ENCODE measurements at regions of chr17 and their contacts with region 1.

Region 1: GRCh38 chr17:55452139-55452790 is 30.6 kb upstream of the MMD start:
- DNase-seq: no peak
- H3K4me3 ChIP-seq: no peak overlapping the region
- H3K4me3 Mint-ChIP-seq: no peak overlapping the region
- H3K27ac Mint-ChIP-seq: peak overlapping the region; percentile 51
- H3K4me1 ChIP-seq: peaks cover 77% of the 10 kb centered on the region
- H3K4me1 Mint-ChIP-seq: peaks cover 73% of the 10 kb centered on the region
- H3K27me3 ChIP-seq: no peaks in the 10 kb centered on the region
- H3K27me3 Mint-ChIP-seq: no peaks in the 10 kb centered on the region
- CTCF ChIP-seq: no peak

Region 2: GRCh38 chr17:55421179-55421934 is 30.9 kb before region 1 on chr17 and contains the start of gene MMD:
- CTCF ChIA-PET with region 1: no interaction called
- POLR2A ChIA-PET with region 1: no interaction called
- intact Hi-C with region 1: loop called (anchors 1 kb)
- DNase-seq: peak in 1 of 2 experiments; percentile 46
- H3K4me3 ChIP-seq: peak within 1 kb of the TSS; percentile 78
- H3K4me3 Mint-ChIP-seq: peak within 1 kb of the TSS; percentile 90
- H3K27ac Mint-ChIP-seq: peak within 1 kb of the TSS; percentile 81
- H3K4me1 ChIP-seq: peaks cover 19% of the 10 kb centered on the region
- H3K4me1 Mint-ChIP-seq: peaks cover 64% of the 10 kb centered on the region
- H3K27me3 ChIP-seq: no peaks in the 10 kb centered on the region
- H3K27me3 Mint-ChIP-seq: no peaks in the 10 kb centered on the region
- CTCF ChIP-seq: no peak
- total RNA-seq, gene MMD: 38.6 and 39.0 TPM in 2 replicates

Region 3: GRCh38 chr17:55433629-55434305 is 18.5 kb before region 1 on chr17:
- CTCF ChIA-PET with region 1: interaction called, 9 read pairs
- POLR2A ChIA-PET with region 1: interaction called, 16 read pairs
- intact Hi-C with region 1: loop called (anchors 1 kb)
- DNase-seq: peak; percentile 64 to 68
- H3K4me3 ChIP-seq: no peak overlapping the region
- H3K4me3 Mint-ChIP-seq: peak overlapping the region; percentile 58
- H3K27ac Mint-ChIP-seq: peak overlapping the region; percentile 94
- H3K4me1 ChIP-seq: peaks cover 48% of the 10 kb centered on the region
- H3K4me1 Mint-ChIP-seq: peaks cover 51% of the 10 kb centered on the region
- H3K27me3 ChIP-seq: no peaks in the 10 kb centered on the region
- H3K27me3 Mint-ChIP-seq: no peaks in the 10 kb centered on the region
- CTCF ChIP-seq: no peak

Region 4: DNA sequence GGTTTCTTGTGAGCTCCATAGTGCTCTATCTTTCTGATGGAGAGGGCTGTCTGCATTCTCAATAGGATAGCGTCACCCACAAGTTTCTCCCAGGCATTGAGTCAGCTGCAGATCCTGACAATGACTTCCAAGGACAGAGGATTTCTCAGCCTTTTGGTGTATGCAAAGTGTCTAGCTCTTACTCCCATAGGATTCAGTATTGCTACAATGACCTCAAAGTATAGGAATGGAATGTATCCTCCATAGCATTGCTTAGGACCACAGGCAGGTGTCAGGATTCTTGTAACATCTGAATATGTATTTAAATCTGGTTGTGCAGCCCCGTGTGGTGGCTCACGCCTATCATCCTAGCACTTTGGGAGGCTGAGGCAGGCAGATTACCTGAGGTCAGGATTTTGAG is 26.7 kb after region 1 on chr17:
- CTCF ChIA-PET with region 1: no interaction called
- POLR2A ChIA-PET with region 1: no interaction called
- intact Hi-C with region 1: no loop called
- DNase-seq: no peak
- H3K4me3 ChIP-seq: no peak overlapping the region
- H3K4me3 Mint-ChIP-seq: no peak overlapping the region
- H3K27ac Mint-ChIP-seq: no peak overlapping the region
- H3K4me1 ChIP-seq: no peaks in the 10 kb centered on the region
- H3K4me1 Mint-ChIP-seq: no peaks in the 10 kb centered on the region
- H3K27me3 ChIP-seq: no peaks in the 10 kb centered on the region
- H3K27me3 Mint-ChIP-seq: no peaks in the 10 kb centered on the region
- CTCF ChIP-seq: no peak

Region 5: DNA sequence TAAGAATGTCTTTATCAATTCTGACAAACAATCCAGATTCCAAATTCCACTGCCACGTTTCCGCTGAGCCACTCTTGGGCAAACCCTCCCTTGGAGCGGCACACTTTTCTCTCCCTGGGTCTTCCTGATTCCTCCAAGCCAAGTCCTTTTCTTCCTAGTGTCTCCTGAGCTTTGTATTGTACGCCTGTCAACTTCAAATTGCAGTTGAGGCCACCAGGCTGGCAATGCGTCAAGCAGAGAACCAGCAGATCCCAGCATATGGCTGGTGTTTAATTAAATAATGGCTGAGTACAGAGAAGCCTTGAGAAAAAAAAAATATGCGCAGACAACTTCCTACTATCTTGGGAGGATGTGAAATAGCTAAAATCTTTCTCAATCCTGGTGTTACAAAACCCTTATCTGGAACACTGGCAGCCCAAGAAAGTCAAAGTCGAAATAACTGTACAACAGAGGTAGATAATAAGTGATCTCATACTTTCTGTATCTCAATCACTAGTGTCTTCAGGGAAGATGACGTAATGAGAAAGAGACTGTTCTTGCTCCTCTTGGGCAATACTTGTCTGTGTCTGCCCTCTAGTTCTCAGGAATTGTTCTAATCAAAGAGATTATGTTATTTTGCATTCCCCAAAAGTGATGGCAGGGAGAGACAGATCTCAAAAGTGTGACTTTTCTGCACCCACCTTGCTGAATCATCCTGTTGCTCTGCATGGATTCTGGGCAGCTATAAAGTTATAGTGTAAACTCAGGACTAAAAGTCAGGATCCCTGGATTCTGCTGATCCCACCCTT is 44.0 kb after region 1 on chr17:
- CTCF ChIA-PET with region 1: no interaction called
- POLR2A ChIA-PET with region 1: no interaction called
- intact Hi-C with region 1: loop called (anchors 2 kb)
- DNase-seq: peak; percentile 56 to 63
- H3K4me3 ChIP-seq: no peak overlapping the region
- H3K4me3 Mint-ChIP-seq: peak overlapping the region; percentile 49
- H3K27ac Mint-ChIP-seq: peak overlapping the region; percentile 68
- H3K4me1 ChIP-seq: peaks cover 20% of the 10 kb centered on the region
- H3K4me1 Mint-ChIP-seq: peaks cover 20% of the 10 kb centered on the region
- H3K27me3 ChIP-seq: no peaks in the 10 kb centered on the region
- H3K27me3 Mint-ChIP-seq: no peaks in the 10 kb centered on the region
- CTCF ChIP-seq: no peak

Region 6: DNA sequence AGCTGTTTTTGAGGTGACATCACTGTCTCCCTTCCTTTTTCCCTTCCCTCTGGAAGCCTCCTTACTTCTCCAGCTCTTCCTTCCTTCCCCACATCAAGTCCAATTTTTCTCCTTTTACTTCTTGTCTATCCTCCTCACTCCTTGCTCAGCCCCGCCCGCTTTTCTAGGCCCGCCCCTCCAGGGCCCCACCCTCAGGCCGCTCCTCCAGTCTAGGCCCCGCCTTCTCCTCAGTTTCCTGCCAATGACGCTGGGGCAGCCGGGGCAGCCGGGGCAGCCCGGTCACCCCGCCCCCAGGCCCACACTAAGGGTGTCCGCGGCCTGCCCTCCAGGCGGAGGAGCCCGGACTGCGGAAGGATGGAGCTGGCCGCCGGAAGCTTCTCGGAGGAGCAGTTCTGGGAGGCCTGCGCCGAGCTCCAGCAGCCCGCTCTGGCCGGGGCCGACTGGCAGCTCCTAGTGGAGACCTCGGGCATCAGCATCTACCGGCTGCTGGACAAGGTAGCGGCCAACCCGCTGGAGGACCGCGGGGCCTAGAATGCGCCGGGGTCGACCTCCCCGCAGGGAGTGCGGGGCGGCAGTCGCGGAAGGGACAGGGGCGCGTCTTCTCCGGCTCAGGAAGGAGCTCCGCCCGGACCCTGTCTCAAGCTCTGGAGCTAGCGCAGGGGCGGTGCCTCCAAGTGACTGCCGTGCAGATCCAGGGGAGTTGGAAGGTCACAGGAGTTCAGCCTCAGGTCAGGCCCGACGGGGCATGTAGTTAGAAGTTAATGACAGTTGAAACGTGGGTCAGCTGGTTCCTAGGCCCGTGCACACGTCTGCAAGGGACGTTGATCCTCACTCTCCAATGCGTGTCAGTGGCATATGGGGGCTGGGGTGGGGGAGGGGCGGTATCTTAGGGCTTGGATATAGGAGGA is 298.7 kb after region 1 on chr17 and contains the start of gene PCTP:
- CTCF ChIA-PET with region 1: no interaction called
- POLR2A ChIA-PET with region 1: no interaction called
- intact Hi-C with region 1: loop called (anchors 5 kb)
- DNase-seq: peak; percentile 95 to 97
- H3K4me3 ChIP-seq: peak within 1 kb of the TSS; percentile 63
- H3K4me3 Mint-ChIP-seq: peak within 1 kb of the TSS; percentile 88
- H3K27ac Mint-ChIP-seq: peak within 1 kb of the TSS; percentile 15
- H3K4me1 ChIP-seq: 0 out of 2 replicates have a peak, but pooled peaks cover 6% of the 10 kb centered on the region
- H3K4me1 Mint-ChIP-seq: peaks cover 14% of the 10 kb centered on the region
- H3K27me3 ChIP-seq: no peaks in the 10 kb centered on the region
- H3K27me3 Mint-ChIP-seq: peaks cover 6% of the 10 kb centered on the region
- CTCF ChIP-seq: peak; percentile 42 to 62
- total RNA-seq, gene PCTP: 15.7 and 16.7 TPM in 2 replicates

Measured in Caco-2 (cell line).